ENCODE measurements at regions of chr14 and their contacts with region 1.

Region 1: GRCh38 chr14:67166450-67166853 is 22.8 kb upstream of the GARIN2 start:
- DNase-seq: no peak
- H3K4me3 ChIP-seq: no peak overlapping the region
- H3K27ac ChIP-seq: no peak overlapping the region
- H3K4me1 ChIP-seq: no peaks in the 10 kb centered on the region
- H3K27me3 ChIP-seq: no peaks in the 10 kb centered on the region
- CTCF ChIP-seq: peak; percentile 83

Region 2: GRCh38 chr14:67285876-67286452 is 119.5 kb after region 1 on chr14:
- intact Hi-C with region 1: loop called (anchors 5 kb)
- DNase-seq: no peak
- H3K4me3 ChIP-seq: no peak overlapping the region
- H3K27ac ChIP-seq: no peak overlapping the region
- H3K4me1 ChIP-seq: no peaks in the 10 kb centered on the region
- H3K27me3 ChIP-seq: no peaks in the 10 kb centered on the region
- CTCF ChIP-seq: peak; percentile 70

Region 3: GRCh38 chr14:67875175-67876006 is 708.9 kb after region 1 on chr14:
- intact Hi-C with region 1: no loop called
- DNase-seq: no peak
- H3K4me3 ChIP-seq: no peak overlapping the region
- H3K27ac ChIP-seq: no peak overlapping the region
- H3K4me1 ChIP-seq: no peaks in the 10 kb centered on the region
- H3K27me3 ChIP-seq: no peaks in the 10 kb centered on the region
- CTCF ChIP-seq: no peak

Measured in left ventricle myocardium inferior (tissue), 1 donor.